GM18951 (cell line): ENCODE measurements at regions of chr1 and their contacts with region 1.

Region 1: GRCh38 chr1:148263128-148263905 is 111.2 kb upstream of the NBPF11 start:
- POLR2A ChIP-seq: peak; percentile 94

Region 2: GRCh38 chr1:148166568-148167492 is 96.5 kb before region 1 on chr1:
- in situ Hi-C with region 1: loop called (anchors 25 kb)
- POLR2A ChIP-seq: no peak

Region 3: DNA sequence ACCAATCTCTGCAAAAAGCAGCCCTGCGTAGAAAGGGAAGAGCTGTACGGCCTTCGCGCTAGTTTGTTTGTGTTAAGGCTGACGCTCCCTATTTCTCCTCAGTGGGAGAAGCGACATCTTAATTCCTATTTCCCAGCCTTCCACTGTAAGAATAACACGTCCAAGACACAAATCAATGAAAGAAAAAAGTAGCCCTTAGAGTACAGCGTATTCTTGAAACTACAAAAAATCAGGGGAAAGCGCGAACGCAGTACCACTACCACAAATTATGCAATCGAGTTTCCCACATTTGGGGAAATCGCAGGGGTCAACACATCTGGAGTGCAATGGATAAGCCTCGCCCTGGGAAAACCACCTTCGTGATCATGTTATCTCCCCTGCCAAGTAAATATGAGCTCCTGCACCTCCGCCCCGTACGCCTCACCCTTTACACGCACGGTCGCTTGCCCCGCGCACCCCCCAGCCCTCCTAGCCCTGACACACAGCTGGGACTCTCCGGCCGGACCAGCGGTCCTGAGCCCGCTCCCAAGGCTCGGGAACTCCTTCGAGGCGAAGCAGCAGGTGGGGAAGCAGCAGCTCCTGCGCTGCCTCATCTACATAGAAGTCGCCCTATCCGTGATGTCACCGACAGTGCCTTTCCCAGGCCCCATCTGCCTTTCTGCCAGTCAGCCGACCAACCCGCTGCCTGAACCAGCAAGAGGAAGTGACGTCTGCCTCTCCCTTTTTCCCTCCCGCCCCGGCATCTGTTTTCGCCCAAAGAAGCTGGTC is 125.1 kb after region 1 on chr1:
- in situ Hi-C with region 1: no loop called
- POLR2A ChIP-seq: peak; percentile 57